Caco-2 (cell line): ENCODE measurements at regions of chr9 and their contacts with region 1.

Region 1: GRCh38 chr9:12554636-12555035 is 138.5 kb upstream of the TYRP1 start:
- DNase-seq: peak in 1 of 2 experiments; percentile 8
- H3K4me3 ChIP-seq: no peak overlapping the region
- H3K4me3 Mint-ChIP-seq: no peak overlapping the region
- H3K27ac Mint-ChIP-seq: no peak overlapping the region
- H3K4me1 ChIP-seq: no peaks in the 10 kb centered on the region
- H3K4me1 Mint-ChIP-seq: no peaks in the 10 kb centered on the region
- H3K27me3 ChIP-seq: no peaks in the 10 kb centered on the region
- H3K27me3 Mint-ChIP-seq: no peaks in the 10 kb centered on the region
- CTCF ChIP-seq: peak in 1 of 2 experiments; percentile 31

Region 2: DNA sequence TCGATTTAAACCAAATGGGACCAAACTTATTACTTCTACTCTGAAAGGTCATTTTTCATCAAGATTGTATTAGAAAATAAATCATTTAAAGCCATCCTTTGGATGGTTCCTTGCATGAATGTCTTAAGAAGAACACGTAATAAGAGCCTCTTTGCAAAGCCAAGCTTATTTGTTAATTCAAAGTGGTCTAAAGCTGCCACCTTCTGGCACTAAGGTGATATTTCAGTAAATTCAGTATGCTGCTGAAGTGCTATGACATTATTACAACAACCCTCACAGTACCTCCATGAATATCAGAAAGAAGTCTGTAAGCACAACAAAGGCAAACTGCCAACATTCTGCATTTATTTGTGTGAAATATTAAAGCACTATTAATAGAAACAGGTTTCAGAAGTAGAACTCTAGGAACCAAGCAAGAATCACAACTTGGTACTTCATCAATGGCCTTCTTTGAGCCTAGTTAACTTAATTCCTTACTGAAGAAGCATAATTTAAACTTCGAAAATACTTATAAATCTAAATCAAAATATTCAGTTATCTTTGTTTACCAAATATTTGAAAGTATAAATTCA is 85.5 kb after region 1 on chr9:
- CTCF ChIA-PET with region 1: interaction called, 9 read pairs
- POLR2A ChIA-PET with region 1: no interaction called
- intact Hi-C with region 1: loop called (anchors 2 kb)
- DNase-seq: peak in 1 of 2 experiments; percentile 27
- H3K4me3 ChIP-seq: no peak overlapping the region
- H3K4me3 Mint-ChIP-seq: no peak overlapping the region
- H3K27ac Mint-ChIP-seq: no peak overlapping the region
- H3K4me1 ChIP-seq: no peaks in the 10 kb centered on the region
- H3K4me1 Mint-ChIP-seq: no peaks in the 10 kb centered on the region
- H3K27me3 ChIP-seq: no peaks in the 10 kb centered on the region
- H3K27me3 Mint-ChIP-seq: no peaks in the 10 kb centered on the region
- CTCF ChIP-seq: peak; percentile 27 to 46